ENCODE measurements at regions of chr2 and their contacts with region 1.

Region 1: DNA sequence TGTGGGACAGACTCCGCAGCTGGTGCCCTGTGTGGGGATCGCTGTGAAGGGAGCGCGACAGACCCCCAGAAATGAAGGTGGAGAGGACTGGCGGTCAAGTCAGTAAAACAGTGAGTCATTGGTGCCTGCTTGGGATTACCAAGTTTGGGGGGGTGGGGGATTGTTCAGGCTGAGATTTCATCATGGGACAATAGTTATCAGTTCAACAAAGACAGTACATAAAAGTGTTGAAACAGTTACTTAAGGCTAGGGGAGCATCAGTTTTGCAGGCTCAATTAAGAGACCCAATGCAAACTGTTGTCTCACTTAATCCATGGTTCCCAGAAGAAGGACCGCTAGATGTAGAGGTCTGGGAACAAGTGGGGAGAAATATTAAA is 42.4 kb upstream of the PDK1 start:
- DNase-seq: no peak
- H3K4me3 ChIP-seq: no peak overlapping the region
- H3K27ac ChIP-seq: no peak overlapping the region
- H3K4me1 ChIP-seq: peaks cover 8% of the 10 kb centered on the region
- H3K27me3 ChIP-seq: no peaks in the 10 kb centered on the region
- CTCF ChIP-seq: no peak

Region 2: DNA sequence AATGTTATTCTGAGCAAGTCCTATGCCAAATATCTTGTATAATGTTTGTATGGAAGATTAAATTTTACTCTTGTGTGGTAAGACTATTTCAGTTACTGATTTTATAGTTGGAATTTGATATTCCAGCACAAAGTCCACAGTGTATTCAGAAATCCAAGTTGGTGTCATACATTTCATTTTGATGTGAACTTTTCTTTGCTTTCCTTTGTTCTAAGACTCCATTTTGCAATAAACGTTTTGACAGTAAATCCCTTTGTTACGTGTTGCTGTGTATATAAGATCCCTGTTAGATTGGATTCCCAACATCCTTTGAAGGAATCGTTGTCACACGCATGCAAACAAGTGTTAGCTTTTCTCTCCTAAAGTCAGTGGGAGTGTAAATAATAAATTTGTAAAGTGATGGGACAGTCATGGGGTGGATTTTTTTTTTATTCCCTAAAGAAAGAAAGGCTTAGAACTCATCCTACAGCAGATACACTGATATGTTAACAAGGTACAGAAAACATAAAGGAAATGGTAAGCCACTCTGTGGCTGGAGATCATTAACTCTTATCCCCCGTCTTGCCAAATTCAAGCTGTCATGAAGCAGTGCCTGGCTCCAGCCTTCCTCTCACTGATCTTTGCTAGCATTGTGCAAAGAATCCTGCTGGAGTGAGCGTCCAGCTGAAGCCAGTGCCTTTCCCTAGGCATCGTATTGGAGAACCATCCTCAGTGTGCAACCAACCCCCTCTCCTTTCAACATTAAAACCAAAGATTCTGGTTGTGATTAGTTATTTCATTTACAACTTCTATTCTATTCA is 713.6 kb after region 1 on chr2:
- CTCF ChIA-PET with region 1: interaction called, 18 read pairs
- POLR2A ChIA-PET with region 1: no interaction called
- intact Hi-C with region 1: no loop called
- DNase-seq: no peak
- H3K4me3 ChIP-seq: no peak overlapping the region
- H3K27ac ChIP-seq: no peak overlapping the region
- H3K4me1 ChIP-seq: no peaks in the 10 kb centered on the region
- H3K27me3 ChIP-seq: no peaks in the 10 kb centered on the region
- CTCF ChIP-seq: no peak

Measured in PC-9 (cell line).